ENCODE measurements at regions of chr2 and their contacts with region 1.

Region 1: GRCh38 chr2:8681786-8682692 is at the start of gene ID2:
- DNase-seq: peak; percentile 100
- ATAC-seq: peak; percentile 78
- total RNA-seq, gene ID2: 30.0 TPM

Region 2: GRCh38 chr2:7427293-7428060 is 1254.6 kb before region 1 on chr2:
- intact Hi-C with region 1: loop called (anchors 2 kb)
- DNase-seq: no peak
- ATAC-seq: peak; percentile 54

Region 3: DNA sequence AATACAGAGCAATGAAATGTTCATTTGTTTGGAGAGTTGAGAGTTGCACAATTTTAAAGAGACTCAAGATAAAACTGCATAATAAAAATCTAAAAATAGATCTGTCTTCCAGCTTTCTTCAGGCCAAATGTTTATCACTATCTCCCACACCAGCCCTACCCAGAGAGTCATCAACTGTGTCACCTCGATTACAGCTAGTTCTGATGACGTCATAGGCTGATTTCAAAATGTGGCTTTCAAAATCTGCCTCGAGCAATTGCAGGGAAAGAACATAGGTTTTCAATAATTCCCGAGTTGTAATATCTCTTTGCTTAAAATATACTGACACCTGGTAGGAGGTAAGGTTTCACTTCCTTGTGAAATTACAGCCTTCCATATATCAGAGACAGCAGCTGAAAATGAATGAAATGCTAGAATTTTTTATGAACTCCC is 677.8 kb before region 1 on chr2:
- intact Hi-C with region 1: loop called (anchors 10 kb)
- DNase-seq: no peak
- ATAC-seq: peak; percentile 86

Measured in left ventricle myocardium superior (tissue), 1 donor.